ENCODE measurements at regions of chr19 and their contacts with region 1.

Region 1: DNA sequence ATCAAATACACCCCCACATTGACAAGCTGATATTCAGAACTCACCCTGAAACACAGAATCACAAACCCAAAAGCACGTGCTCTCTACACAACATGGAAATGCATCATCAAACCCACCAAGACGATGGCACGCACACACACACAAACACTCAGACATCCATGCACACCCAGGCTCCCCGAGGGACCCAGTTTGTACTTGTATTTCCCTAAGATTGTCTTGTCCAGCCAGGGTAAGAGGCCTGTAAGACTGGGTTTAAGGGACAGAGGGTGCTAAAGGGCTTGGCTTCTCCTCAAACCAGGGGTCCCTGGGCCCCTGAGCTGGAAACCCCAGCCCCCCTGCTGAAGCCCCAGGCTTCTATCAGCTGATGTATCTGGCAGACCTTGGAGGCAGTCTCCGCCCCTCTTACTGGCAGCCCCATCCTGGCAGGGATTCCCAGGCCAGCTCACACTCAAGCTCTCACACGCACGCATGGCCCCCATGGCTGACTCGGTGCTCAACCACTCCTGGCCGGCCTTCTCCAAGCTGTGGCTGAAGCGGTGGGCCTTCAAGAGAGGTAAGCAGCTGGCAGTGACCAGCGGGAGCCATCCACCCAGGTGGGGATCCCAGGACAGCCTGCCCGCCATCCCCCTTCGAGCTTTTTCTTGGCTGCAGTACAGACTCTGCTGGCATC is 6.5 kb downstream of the ARHGEF18 start:
- DNase-seq: no peak
- ATAC-seq: peak; percentile 10; the same call in 2 of the 3 replicates
- H3K4me3 ChIP-seq: no peak overlapping the region
- H3K27ac ChIP-seq: no peak overlapping the region
- H3K4me1 ChIP-seq: peaks cover 11% of the 10 kb centered on the region
- H3K27me3 ChIP-seq: no peaks in the 10 kb centered on the region
- CTCF ChIP-seq: no peak
- EP300 ChIP-seq: no peak
- POLR2A ChIP-seq: no peak
- RAD21 ChIP-seq: no peak

Region 2: DNA sequence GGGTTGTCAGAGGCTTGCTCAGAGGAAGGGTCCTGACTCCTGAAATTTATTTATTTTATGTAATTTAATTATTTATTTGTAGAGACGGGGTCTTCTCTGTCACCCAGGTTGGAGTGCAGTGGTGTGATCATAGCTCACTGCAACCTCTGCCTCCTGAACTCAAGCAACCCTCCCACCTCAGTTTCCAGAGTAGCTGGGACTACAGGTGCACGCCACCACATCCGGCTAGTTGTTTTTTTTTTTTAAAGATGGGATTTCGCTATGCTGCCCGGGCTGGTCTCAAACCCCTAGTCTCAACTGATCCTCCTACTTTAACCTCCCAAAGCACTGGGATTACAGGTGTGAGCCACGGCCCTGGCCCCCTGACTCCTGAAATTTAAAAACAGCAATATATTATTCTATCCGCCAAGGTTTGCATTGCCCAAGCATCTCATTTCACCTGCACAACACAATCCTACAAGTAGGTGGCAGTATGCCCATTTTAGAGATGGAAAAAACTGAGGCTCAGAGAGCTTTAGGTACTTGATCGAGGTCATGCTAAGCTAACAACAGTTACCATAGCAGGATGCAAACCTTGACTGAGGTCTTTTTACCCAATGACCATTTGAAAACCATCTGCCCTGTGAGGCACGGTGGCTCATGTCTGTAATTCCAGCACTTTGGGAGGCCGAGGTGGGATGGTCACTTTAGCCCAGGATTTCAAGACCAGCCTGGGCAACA is 11.6 kb after region 1 on chr19:
- CTCF ChIA-PET with region 1: interaction called, 28 read pairs
- POLR2A ChIA-PET with region 1: interaction called, 3 read pairs
- RAD21 ChIA-PET with region 1: interaction called, 7 read pairs
- SMC1A ChIA-PET with region 1: interaction called, 10 read pairs
- in situ Hi-C with region 1: no loop called
- intact Hi-C with region 1: no loop called
- DNase-seq: no peak
- ATAC-seq: peak; percentile 90
- H3K4me3 ChIP-seq: no peak overlapping the region
- H3K27ac ChIP-seq: no peak overlapping the region
- H3K4me1 ChIP-seq: no peaks in the 10 kb centered on the region
- H3K27me3 ChIP-seq: no peaks in the 10 kb centered on the region
- CTCF ChIP-seq: peak; percentile 65 to 69 (median 66)
- EP300 ChIP-seq: no peak
- POLR2A ChIP-seq: no peak
- RAD21 ChIP-seq: peak; percentile 72

Measured in GM12878 (cell line).